ENCODE measurements at regions of chr19 and their contacts with region 1.

Region 1: GRCh38 chr19:3762501-3763459 is at the start of gene MRPL54:
- DNase-seq: peak; percentile 96 to 99 (median 98)
- H3K4me3 ChIP-seq: peak within 1 kb of the TSS; percentile 64 to 100 (median 97)
- H3K27ac ChIP-seq: peak within 1 kb of the TSS; percentile 78 to 100 (median 99)
- H3K27me3 ChIP-seq: no peaks in the 10 kb centered on the region
- CTCF ChIP-seq: peak in 33 of 56 donors; percentile 2 to 49 (median 19)
- total RNA-seq, gene MRPL54: 21.6 to 65.1 (median 45.6) TPM

Region 2: DNA sequence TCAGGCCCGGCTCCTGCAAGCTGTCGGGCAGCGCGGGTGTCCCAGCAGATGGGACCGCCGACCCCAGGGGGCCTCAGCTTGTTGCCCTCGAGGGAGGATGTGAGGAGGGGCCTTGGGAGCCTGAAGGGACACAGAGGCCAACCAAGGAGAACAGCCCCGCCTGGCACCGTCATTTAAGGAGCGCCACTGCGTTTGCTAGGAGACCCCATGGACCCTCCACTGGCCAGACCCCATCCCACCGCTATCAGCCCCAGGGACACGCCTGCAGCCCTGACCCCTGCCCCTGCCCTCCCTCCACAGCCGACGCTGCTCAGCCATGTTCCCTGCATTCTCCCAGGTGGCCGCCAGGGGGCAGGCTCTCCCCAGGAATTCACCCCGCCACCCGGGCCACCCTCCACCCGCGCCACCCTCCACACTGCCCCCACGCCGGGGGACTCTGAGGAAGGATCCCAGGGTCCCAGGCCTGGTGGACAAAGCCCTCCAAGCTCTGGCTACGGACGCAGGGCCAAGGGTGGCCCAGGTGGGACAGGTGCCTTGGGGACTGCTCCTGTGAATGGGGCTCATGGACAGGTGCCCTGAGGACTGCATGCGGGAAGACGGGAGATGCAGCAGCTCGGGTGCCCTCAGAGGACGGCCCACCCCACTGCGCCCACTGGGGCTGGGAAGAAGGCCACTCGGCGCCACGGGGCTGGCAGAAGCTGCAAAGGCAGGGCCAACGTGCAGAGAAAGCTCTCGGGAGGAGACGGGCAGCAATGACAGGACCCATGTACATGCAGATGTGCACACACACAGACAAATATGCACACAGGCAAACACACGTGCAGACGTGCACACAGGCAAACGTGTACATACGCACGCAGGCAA is 96.9 kb before region 1 on chr19:
- intact Hi-C with region 1: no loop called
- DNase-seq: peak in 9 of 10 donors; percentile 50 to 84 (median 69)
- H3K4me3 ChIP-seq: peak overlapping the region in 4 of 59 donors; percentile 3 to 23 (median 18)
- H3K27ac ChIP-seq: peak overlapping the region in 28 of 59 donors; percentile 2 to 68 (median 40)
- H3K27me3 ChIP-seq: no peaks in the 10 kb centered on the region
- CTCF ChIP-seq: peak; percentile 79 to 99 (median 96)

Region 3: DNA sequence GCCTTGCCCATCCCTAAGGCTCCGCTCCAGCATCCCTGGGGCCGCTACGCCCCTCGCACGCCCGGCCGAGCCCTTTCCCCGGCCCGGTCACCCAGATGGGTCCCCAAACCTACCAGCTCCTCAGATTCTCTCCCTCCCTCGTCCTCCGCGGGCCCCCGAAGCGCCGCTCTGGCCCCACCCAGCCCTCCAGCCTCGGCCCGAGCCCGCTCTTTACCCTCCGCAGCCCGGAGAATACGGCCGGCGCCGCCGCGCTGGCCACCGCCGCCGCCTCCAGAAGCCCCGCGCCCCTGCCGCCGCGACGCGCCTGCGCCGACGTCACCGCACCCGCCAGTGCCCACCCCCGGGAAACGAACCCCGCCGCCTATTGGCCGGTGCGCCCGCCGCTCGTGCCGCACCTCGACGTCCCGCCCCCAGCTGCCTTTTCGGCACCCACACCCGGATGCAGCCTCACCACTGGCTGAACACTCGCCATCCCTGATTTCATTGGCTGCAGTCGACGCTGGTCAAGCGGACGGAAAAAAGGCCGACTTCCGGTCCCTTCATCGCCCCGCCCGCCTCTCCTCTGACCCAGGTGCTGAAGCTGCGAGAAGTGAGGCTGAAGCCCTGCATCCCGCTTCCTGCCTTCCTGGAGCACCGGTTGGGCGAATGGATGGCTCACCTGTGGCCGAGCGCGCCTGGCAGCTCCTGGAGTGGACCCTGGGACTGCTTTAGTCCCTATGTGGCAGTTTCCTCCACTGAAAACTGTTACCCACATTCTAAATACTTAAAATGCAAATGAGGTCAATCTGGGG is 208.2 kb after region 1 on chr19 and contains the start of gene DAPK3:
- intact Hi-C with region 1: loop called in 1 of 2 experiments (anchors 5 kb)
- DNase-seq: peak; percentile 94 to 99 (median 98)
- H3K4me3 ChIP-seq: peak within 1 kb of the TSS; percentile 49 to 99 (median 88)
- H3K27ac ChIP-seq: peak within 1 kb of the TSS in 57 of 59 donors; percentile 43 to 97 (median 85)
- H3K27me3 ChIP-seq: no peaks in the 10 kb centered on the region
- CTCF ChIP-seq: peak in 42 of 56 donors; percentile 9 to 67 (median 40)
- total RNA-seq, gene DAPK3: 47.9 to 98.2 (median 67.8) TPM